ENCODE measurements at regions of chr4 and their contacts with region 1.

Region 1: DNA sequence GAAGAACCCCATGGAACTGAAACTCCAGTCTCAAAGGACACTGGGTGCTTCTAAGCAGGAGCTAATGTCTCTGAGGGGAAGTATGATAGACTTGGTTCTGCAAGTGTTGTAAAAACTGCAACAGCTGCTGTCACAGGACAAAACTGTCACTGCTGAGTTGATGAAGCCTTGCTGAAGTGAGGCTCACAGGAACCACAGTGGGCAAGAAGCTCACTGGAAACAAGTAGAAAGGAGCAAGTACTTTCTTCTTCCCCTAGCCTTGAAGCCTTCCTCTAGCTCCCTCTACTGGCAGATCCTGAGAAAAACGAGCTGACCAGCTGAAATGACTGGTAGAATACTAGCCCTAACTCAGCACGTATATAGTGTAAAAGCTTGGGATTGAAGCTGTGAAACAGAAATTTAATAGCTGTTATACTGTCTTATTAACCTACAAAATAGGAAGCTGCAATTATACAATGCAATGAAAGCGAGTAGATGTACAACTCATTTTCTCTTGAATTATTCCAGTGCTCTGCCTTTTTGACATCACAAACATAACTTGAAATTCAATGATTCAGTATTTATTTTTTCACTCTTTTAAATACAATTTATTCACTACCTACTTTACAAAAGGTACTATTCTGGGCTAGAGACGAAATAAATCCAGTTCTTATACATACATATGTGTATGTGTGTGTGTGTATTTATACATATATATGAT is 91.4 kb downstream of the GABRB1 start:
- DNase-seq: peak; percentile 45
- H3K4me3 ChIP-seq: peak overlapping the region in 1 of 2 experiments; percentile 19; a peak in 1 of 4 replicates
- H3K27ac ChIP-seq: no peak overlapping the region
- H3K4me1 ChIP-seq: peaks cover 0 to 7% of the 10 kb centered on the region in 2 experiments; a peak in 1 of 4 replicates
- H3K27me3 ChIP-seq: peaks cover 14% of the 10 kb centered on the region; the same call in 1 of the 2 replicates
- CTCF ChIP-seq: peak; percentile 91
- EP300 ChIP-seq: no peak
- RAD21 ChIP-seq: peak; percentile 62

Region 2: DNA sequence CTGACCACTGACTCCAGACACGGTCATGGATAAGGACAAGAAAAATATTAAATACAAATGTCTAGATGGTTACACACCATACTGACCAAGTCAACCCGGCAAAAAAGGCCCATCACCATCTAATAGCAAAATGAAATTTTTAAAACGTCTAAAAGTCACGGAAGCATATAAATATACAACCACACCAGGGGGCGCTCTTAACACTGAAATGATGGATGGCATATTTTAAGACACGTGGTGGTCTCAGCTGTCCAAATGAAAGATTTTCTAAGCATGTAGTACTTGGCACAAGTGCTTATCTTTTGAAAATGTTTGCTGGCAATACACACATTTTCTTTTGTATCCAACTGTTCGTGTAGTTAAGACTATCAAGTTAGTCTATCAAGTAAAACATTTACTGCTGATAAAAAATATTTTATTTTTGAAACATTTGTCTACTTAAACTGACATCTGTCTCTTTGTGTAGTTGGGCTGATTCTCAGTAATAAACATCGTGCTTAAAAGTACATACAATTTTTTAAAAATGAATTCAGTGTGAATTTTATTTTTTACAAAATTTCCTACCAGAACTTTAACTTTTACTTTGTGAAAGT is 278.3 kb before region 1 on chr4:
- CTCF ChIA-PET with region 1: no interaction called
- POLR2A ChIA-PET with region 1: no interaction called
- DNase-seq: peak; percentile 23
- H3K4me3 ChIP-seq: peak overlapping the region in 1 of 2 experiments; percentile 14; a peak in 1 of 4 replicates
- H3K27ac ChIP-seq: no peak overlapping the region
- H3K4me1 ChIP-seq: no peaks in the 10 kb centered on the region
- H3K27me3 ChIP-seq: peaks cover 17% of the 10 kb centered on the region; the same call in 1 of the 2 replicates
- CTCF ChIP-seq: peak; percentile 84
- EP300 ChIP-seq: no peak
- RAD21 ChIP-seq: peak; percentile 73

Region 3: DNA sequence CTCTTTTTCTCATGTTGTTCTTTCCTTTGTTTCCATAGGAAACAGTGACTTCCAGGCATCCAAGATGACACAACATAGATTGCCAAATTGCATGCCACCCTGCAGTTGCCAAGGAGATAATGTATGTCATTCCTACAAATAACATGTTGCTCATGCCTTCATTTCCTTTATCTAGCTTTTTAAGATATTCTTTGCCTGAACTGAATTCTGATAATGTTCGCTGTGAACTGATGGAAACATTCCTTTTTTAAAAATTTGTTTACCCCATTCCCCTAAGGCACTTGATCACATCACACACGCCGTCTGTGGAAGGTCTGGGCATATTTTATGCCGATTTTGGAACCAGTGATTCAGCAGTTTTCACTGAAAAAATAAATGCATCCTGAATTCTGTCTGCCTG is 175.7 kb before region 1 on chr4:
- CTCF ChIA-PET with region 1: no interaction called
- POLR2A ChIA-PET with region 1: no interaction called
- DNase-seq: no peak
- H3K4me3 ChIP-seq: no peak overlapping the region
- H3K27ac ChIP-seq: no peak overlapping the region
- H3K4me1 ChIP-seq: peaks cover 0 to 15% of the 10 kb centered on the region in 2 experiments; a peak in 1 of 4 replicates
- H3K27me3 ChIP-seq: no peaks in the 10 kb centered on the region
- CTCF ChIP-seq: no peak
- EP300 ChIP-seq: no peak
- RAD21 ChIP-seq: no peak

Region 4: DNA sequence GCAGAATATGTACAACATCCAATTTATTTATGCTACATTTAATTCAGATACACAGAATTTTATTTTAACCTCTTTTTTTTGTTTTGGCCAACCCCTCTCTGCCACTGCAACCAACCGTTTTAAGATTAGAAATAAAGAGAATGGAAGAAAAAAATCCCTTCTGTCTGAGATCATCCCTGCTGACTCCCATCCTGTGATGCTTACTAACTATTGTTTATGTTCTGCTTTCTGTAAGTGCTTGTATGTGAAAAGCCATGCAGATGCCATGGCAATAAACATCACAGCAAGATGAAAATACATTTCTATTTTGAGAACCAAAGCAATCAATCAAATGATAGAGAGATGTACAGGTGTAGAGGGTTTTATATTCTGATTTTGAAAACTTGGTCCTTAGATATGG is 21.3 kb before region 1 on chr4:
- CTCF ChIA-PET with region 1: interaction called, 11 read pairs
- POLR2A ChIA-PET with region 1: no interaction called
- DNase-seq: no peak
- H3K4me3 ChIP-seq: no peak overlapping the region
- H3K27ac ChIP-seq: no peak overlapping the region
- H3K4me1 ChIP-seq: no peaks in the 10 kb centered on the region
- H3K27me3 ChIP-seq: peaks cover 9% of the 10 kb centered on the region; the same call in 1 of the 2 replicates
- CTCF ChIP-seq: no peak
- EP300 ChIP-seq: no peak
- RAD21 ChIP-seq: no peak

Region 5: DNA sequence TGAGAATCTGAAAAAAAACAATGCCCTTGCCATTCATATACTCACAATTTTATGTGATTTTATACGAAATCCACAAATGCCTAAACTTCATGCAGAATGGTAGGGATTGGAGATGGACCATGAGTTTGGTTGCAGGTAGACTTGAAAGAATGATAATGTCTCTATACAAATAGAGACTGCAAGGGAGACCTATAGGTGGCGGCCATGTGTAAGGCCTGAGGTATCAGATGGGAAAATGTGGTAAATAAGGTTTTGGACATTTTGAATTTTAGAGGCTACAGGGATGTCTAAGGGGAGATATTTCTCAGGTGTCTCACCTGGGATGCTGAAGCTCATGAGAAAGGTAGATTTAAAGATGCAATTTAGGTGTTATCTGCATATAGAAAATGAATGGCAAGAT is 13.4 kb before region 1 on chr4:
- CTCF ChIA-PET with region 1: interaction called, 22 read pairs
- POLR2A ChIA-PET with region 1: no interaction called
- DNase-seq: no peak
- H3K4me3 ChIP-seq: no peak overlapping the region
- H3K27ac ChIP-seq: no peak overlapping the region
- H3K4me1 ChIP-seq: no peaks in the 10 kb centered on the region
- H3K27me3 ChIP-seq: peaks cover 14% of the 10 kb centered on the region; the same call in 1 of the 2 replicates
- CTCF ChIP-seq: peak; percentile 13; the same call in 1 of the 2 replicates
- EP300 ChIP-seq: no peak
- RAD21 ChIP-seq: no peak

Region 6: DNA sequence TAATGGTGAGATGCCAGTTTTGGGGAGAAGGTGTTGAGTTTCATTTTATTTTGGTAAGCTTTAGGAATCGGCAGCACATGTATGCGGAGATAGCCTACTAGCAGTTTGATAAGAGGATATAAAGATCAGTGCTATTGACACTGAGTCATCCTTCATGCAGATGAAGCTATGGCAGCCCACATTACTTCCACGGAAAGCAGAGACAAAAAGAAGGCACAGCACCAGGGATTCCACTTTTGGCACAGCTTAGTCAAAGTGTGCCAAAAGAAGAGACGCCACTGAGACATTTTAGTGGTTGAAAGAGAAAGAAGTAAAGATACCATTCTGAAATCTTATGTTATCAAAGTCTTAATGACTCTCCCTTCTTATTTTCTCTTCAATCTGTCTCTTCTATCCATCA is 12.5 kb after region 1 on chr4:
- CTCF ChIA-PET with region 1: interaction called, 16 read pairs
- POLR2A ChIA-PET with region 1: no interaction called
- DNase-seq: no peak
- H3K4me3 ChIP-seq: no peak overlapping the region
- H3K27ac ChIP-seq: no peak overlapping the region
- H3K4me1 ChIP-seq: no peaks in the 10 kb centered on the region
- H3K27me3 ChIP-seq: no peaks in the 10 kb centered on the region
- CTCF ChIP-seq: no peak
- EP300 ChIP-seq: no peak
- RAD21 ChIP-seq: no peak

Measured in SK-N-SH (cell line).